ENCODE measurements at regions of chr19 and their contacts with region 1.

Region 1: GRCh38 chr19:39119554-39120229 is 5.9 kb upstream of the PAK4 start:
- DNase-seq: no peak
- ATAC-seq: no peak
- H3K4me3 Mint-ChIP-seq: no peak overlapping the region
- H3K27ac Mint-ChIP-seq: no peak overlapping the region
- H3K4me1 Mint-ChIP-seq: peaks cover 12% of the 10 kb centered on the region
- H3K27me3 Mint-ChIP-seq: peaks cover 4% of the 10 kb centered on the region

Region 2: GRCh38 chr19:39187559-39187957 is 67.9 kb after region 1 on chr19:
- CTCF ChIA-PET with region 1: interaction called, 15 read pairs
- DNase-seq: no peak
- ATAC-seq: no peak
- H3K4me3 Mint-ChIP-seq: no peak overlapping the region
- H3K27ac Mint-ChIP-seq: no peak overlapping the region
- H3K4me1 Mint-ChIP-seq: no peaks in the 10 kb centered on the region
- H3K27me3 Mint-ChIP-seq: peaks cover 13% of the 10 kb centered on the region